ENCODE measurements at regions of chr16 and their contacts with region 1.

Region 1: GRCh38 chr16:30844671-30845449 is 49.0 kb downstream of the BCL7C start:
- DNase-seq: peak; percentile 90
- H3K4me3 Mint-ChIP-seq: no peak overlapping the region
- H3K27ac Mint-ChIP-seq: no peak overlapping the region
- H3K4me1 Mint-ChIP-seq: no peaks in the 10 kb centered on the region
- H3K27me3 Mint-ChIP-seq: no peaks in the 10 kb centered on the region
- CTCF ChIP-seq: peak; percentile 83

Region 2: GRCh38 chr16:30858829-30859423 is 14.1 kb after region 1 on chr16:
- CTCF ChIA-PET with region 1: interaction called, 47 read pairs
- POLR2A ChIA-PET with region 1: interaction called, 8 read pairs
- intact Hi-C with region 1: no loop called
- DNase-seq: no peak
- H3K4me3 Mint-ChIP-seq: no peak overlapping the region
- H3K27ac Mint-ChIP-seq: no peak overlapping the region
- H3K4me1 Mint-ChIP-seq: peaks cover 1% of the 10 kb centered on the region
- H3K27me3 Mint-ChIP-seq: no peaks in the 10 kb centered on the region
- CTCF ChIP-seq: no peak

Region 3: DNA sequence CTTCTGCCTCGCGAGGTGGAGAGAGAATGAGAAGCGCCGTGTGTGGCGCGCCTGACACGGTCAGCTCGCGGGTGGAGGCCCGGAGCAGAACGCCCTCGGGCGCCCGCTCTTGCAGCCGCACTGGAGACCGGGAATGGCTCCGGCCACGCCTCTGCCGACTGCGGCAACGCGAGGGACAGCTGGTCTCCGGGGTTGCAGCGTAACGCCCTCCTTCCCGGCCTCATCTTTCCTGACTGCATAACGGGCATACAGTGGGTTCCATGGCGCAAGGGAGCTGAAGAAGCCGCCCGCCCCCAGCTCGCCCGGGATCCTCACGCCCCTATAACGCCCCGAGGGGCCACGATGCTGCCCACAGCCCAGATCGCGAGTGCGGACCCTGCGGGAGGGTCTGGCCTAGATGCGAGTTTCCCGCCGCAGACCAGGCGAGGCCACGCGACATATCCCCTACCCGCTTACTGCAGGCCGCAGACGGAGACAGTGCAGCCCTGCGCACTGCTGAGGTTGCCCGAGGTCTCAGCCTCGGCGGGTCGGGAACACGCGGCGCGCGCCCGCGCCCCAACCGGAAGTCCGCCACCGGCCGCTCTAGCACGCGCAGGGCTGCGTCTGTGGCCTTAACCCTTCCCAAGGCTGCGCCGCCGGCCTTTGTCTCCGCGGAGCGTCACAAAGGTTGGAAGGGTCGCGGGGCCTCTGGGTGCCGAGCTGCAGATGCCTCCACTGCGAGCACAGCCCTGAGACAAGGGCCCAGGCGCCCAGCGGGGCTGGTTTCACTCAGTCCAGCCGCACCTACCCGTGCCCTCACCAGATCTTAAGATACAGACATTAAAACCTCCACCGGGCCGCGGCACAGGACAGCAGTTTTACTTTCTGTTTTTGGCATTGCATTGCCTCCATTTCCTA is 30.2 kb after region 1 on chr16:
- CTCF ChIA-PET with region 1: interaction called, 23 read pairs
- POLR2A ChIA-PET with region 1: interaction called, 6 read pairs
- intact Hi-C with region 1: no loop called
- DNase-seq: peak; percentile 85
- H3K4me3 Mint-ChIP-seq: peak overlapping the region; percentile 91
- H3K27ac Mint-ChIP-seq: peak overlapping the region; percentile 72
- H3K4me1 Mint-ChIP-seq: peaks cover 12% of the 10 kb centered on the region
- H3K27me3 Mint-ChIP-seq: no peaks in the 10 kb centered on the region
- CTCF ChIP-seq: no peak

Region 4: GRCh38 chr16:30902029-30902972 is 57.4 kb after region 1 on chr16:
- CTCF ChIA-PET with region 1: interaction called, 88 read pairs
- POLR2A ChIA-PET with region 1: interaction called, 7 read pairs
- intact Hi-C with region 1: loop called (anchors 1 kb)
- DNase-seq: peak; percentile 57
- H3K4me3 Mint-ChIP-seq: peak overlapping the region; percentile 75
- H3K27ac Mint-ChIP-seq: peak overlapping the region; percentile 55
- H3K4me1 Mint-ChIP-seq: peaks cover under 1% of the 10 kb centered on the region
- H3K27me3 Mint-ChIP-seq: no peaks in the 10 kb centered on the region
- CTCF ChIP-seq: no peak

Region 5: DNA sequence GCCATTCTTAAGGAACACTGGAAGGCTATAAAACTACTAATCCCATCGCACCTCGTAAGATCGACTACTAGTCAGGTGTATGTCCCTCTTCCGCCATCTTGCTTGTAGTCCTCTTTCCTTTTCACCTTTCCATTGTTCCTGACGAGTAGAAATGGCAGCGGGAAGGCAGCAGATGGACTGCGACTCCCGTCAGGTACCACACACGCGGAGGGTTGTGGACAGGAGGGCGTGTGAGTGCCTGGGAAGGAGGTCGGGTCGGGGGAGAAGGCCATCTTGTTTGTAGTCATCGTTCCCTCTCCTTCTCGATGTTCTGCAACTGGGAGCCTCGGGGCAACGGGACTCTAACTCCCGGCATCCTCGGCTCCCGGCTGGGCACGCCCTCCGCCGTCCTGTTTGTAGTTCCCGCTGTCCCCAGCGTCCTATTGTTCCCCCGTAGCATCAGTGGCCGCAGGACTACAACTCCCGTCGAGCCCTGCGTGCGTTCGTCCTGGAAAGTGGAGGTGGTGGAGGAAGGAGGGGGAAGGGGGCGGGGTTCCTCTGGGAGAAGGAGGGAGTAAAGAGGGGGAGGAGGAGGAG is 78.2 kb after region 1 on chr16:
- CTCF ChIA-PET with region 1: interaction called, 9 read pairs
- POLR2A ChIA-PET with region 1: interaction called, 5 read pairs
- intact Hi-C with region 1: loop called (anchors 1 kb)
- DNase-seq: peak; percentile 100
- H3K4me3 Mint-ChIP-seq: peak overlapping the region; percentile 98
- H3K27ac Mint-ChIP-seq: peak overlapping the region; percentile 100
- H3K4me1 Mint-ChIP-seq: peaks cover 14% of the 10 kb centered on the region
- H3K27me3 Mint-ChIP-seq: no peaks in the 10 kb centered on the region
- CTCF ChIP-seq: no peak

Measured in MCF 10A (cell line).